Panc1 (cell line): ENCODE measurements at regions of chr20 and their contacts with region 1.

Region 1: DNA sequence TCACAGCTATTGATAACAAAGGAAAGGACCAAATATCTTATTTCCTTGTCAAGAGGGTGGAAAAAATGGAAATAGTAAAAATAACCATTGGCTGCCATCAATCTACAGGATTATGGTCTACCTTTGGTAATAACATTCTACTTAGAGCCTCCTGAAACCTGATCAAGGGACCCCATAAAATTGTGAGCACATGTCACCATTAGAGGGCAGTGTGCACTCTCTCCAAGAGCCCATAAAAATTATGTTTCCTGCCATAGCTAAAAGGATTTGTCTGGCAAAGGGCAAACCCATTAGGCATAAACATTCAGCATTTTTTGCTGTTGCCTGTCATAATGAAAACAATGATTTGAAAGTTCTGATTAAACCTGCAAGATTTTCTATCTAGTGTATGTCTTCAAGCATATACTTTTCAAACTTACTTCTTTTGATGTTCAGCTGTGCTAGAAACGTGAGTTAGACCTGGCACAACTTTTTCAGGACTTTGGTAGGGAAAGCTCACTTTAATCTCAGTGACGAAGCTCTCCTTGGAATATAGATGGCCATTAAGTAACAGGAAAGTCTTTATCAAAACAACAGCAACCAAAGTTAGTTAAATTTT is 120.7 kb upstream of the ZFP64 start:
- DNase-seq: peak; percentile 45
- ATAC-seq: peak; percentile 83
- H3K4me3 ChIP-seq: no peak overlapping the region
- H3K27ac ChIP-seq: no peak overlapping the region
- H3K4me1 ChIP-seq: peaks cover 11% of the 10 kb centered on the region; the same call in 1 of the 2 replicates
- H3K27me3 ChIP-seq: peaks cover 2% of the 10 kb centered on the region; the same call in 1 of the 2 replicates
- CTCF ChIP-seq: peak; percentile 83

Region 2: GRCh38 chr20:52379723-52380336 is 67.6 kb after region 1 on chr20:
- CTCF ChIA-PET with region 1: interaction called, 3 read pairs
- POLR2A ChIA-PET with region 1: no interaction called
- in situ Hi-C with region 1: no loop called
- intact Hi-C with region 1: loop called (anchors 1 kb)
- DNase-seq: peak; percentile 25
- ATAC-seq: no peak
- H3K4me3 ChIP-seq: no peak overlapping the region
- H3K27ac ChIP-seq: no peak overlapping the region
- H3K4me1 ChIP-seq: no peaks in the 10 kb centered on the region
- H3K27me3 ChIP-seq: 0 out of 2 replicates have a peak, but pooled peaks cover 2% of the 10 kb centered on the region
- CTCF ChIP-seq: peak; percentile 96

Region 3: GRCh38 chr20:53202777-53203176 is 890.5 kb after region 1 on chr20:
- CTCF ChIA-PET with region 1: no interaction called
- POLR2A ChIA-PET with region 1: interaction called, 10 read pairs
- in situ Hi-C with region 1: no loop called
- intact Hi-C with region 1: no loop called
- DNase-seq: no peak
- ATAC-seq: no peak
- H3K4me3 ChIP-seq: no peak overlapping the region
- H3K27ac ChIP-seq: no peak overlapping the region
- H3K4me1 ChIP-seq: no peaks in the 10 kb centered on the region
- H3K27me3 ChIP-seq: peaks cover 8% of the 10 kb centered on the region
- CTCF ChIP-seq: no peak

Region 4: DNA sequence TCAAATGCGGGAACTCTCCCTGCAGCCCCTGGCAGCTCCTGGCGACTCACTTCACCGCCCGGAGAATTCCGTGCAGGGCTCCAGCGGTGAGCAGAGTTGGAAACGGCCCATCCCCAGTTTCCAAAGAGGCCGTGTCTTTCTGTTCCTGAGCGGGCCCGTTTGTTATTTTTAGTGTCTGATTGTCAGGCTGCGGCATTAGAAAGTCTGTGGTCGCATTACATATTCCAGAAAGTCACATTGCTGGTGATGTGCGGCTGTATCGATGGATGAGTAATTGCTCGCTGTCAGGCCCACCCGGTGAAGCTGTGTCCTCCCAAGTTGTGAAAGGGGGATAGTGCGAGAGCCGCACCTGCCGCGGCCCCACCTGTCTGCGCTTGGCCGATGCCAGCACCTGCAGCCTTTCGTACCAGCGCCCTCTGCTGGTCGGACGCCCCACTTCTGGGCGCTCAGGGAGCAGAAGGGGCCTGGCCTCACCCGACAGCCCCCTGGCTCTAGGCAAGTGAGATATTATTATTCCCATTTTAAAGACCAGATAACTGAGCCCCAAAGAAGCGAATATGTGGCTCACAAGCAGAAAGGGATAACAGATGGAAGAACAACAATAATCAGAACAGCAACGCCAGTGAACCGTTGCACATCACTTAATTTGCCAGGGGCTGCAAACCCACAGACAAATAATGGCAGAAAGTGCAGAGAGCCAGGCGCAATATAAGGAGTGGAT is 904.8 kb after region 1 on chr20:
- CTCF ChIA-PET with region 1: interaction called, 5 read pairs
- POLR2A ChIA-PET with region 1: interaction called, 8 read pairs
- in situ Hi-C with region 1: no loop called
- intact Hi-C with region 1: loop called (anchors 5 kb)
- DNase-seq: peak; percentile 17
- ATAC-seq: peak; percentile 85
- H3K4me3 ChIP-seq: no peak overlapping the region
- H3K27ac ChIP-seq: no peak overlapping the region
- H3K4me1 ChIP-seq: no peaks in the 10 kb centered on the region
- H3K27me3 ChIP-seq: peaks cover 5% of the 10 kb centered on the region; the same call in 1 of the 2 replicates
- CTCF ChIP-seq: peak; percentile 96

Region 5: GRCh38 chr20:53547664-53548239 is 1235.5 kb after region 1 on chr20:
- CTCF ChIA-PET with region 1: no interaction called
- POLR2A ChIA-PET with region 1: no interaction called
- in situ Hi-C with region 1: no loop called
- intact Hi-C with region 1: loop called (anchors 5 kb)
- DNase-seq: peak; percentile 45
- ATAC-seq: peak; percentile 88
- H3K4me3 ChIP-seq: no peak overlapping the region
- H3K27ac ChIP-seq: peak overlapping the region; percentile 65
- H3K4me1 ChIP-seq: no peaks in the 10 kb centered on the region; the same call in 1 of the 2 replicates
- H3K27me3 ChIP-seq: no peaks in the 10 kb centered on the region
- CTCF ChIP-seq: peak; percentile 86